Testis (tissue), 5 donors: ENCODE measurements at regions of chr12 and their contacts with region 1.

Region 1: GRCh38 chr12:123141615-123142517 is 9.0 kb downstream of the PITPNM2 start:
- DNase-seq: peak; percentile 83
- H3K4me3 ChIP-seq: no peak overlapping the region
- H3K27ac ChIP-seq: peak overlapping the region in 1 of 2 donors; percentile 74
- H3K4me1 ChIP-seq: peaks cover 41% of the 10 kb centered on the region
- H3K27me3 ChIP-seq: no peaks in the 10 kb centered on the region
- CTCF ChIP-seq: no peak
- POLR2A ChIP-seq: no peak

Region 2: DNA sequence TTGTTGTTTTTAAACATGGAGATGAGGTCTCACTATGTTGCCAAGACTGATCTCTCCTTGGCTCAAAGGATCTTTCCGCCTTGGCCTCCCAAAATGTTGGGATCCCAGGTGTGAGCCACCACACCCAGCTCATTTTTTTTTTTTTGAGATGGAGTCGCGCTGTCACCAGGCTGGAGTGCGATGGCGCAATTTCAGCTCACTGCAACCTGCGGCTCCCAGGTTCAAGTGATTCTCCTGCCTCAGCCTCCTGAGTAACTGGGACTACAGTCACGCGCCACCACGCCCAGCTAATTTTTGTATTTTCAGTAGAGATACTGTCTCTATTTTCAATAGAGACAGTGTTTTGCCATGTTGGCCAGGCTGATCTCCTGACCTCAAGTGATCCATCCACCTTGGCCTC is 714.5 kb before region 1 on chr12:
- intact Hi-C with region 1: no loop called
- DNase-seq: no peak
- H3K4me3 ChIP-seq: no peak overlapping the region
- H3K27ac ChIP-seq: no peak overlapping the region
- H3K4me1 ChIP-seq: peaks cover 12% of the 10 kb centered on the region
- H3K27me3 ChIP-seq: no peaks in the 10 kb centered on the region
- CTCF ChIP-seq: no peak
- POLR2A ChIP-seq: no peak

Region 3: DNA sequence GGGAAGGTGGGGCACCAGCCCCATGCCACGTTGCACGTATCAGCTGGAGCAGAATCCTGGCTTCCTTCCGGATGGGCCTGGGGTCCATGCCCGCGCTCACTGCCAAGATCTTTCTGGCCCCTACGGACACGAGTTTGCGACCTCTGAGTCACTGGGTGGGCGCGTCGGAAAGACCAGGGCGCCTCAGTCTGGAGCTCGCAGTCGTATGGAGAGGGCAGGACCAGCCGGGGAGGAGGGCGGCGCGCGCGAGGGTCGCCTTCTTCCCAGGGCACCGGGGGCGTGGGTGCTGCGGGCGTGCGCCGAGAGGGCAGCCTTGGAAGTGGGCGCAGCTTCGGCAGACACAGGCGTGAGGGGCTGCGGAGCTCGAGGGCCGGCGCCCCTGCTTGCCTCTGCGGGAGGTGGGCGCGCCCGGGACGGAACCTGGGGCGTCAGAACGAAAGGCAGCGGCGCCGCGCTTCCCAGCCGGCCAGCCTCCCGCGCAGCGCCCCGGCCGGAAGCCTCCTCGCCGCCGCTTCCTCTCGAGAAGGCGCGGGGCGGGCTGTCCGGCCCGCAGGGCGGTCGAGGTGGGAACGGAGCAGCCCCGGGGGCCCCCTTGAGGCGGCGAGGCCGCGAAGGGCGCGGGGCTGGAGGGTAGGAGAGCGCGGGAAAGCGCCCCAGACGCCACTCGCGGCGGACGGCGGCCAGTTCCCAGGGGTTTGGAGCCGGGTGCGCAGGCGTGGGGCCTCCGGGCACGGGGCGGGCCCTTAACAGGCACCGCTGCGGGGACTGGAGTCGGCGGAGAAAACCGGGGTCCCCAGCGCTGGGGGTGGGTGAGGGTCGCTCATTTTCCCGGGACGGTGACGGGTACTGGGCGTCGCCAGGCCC is 161.5 kb before region 1 on chr12 and contains the start of gene ARL6IP4:
- intact Hi-C with region 1: loop called (anchors 10 kb)
- DNase-seq: peak; percentile 63
- H3K4me3 ChIP-seq: peak within 1 kb of the TSS; percentile 94 to 97
- H3K27ac ChIP-seq: peak within 1 kb of the TSS; percentile 89 to 92
- H3K4me1 ChIP-seq: peaks cover 62% of the 10 kb centered on the region
- H3K27me3 ChIP-seq: no peaks in the 10 kb centered on the region
- CTCF ChIP-seq: no peak
- POLR2A ChIP-seq: peak; percentile 10
- total RNA-seq, gene ARL6IP4: 169 to 190 TPM

Region 4: GRCh38 chr12:123043536-123044001 is 98.3 kb before region 1 on chr12:
- intact Hi-C with region 1: loop called (anchors 10 kb)
- DNase-seq: peak; percentile 83
- H3K4me3 ChIP-seq: no peak overlapping the region
- H3K27ac ChIP-seq: peak overlapping the region in 1 of 2 donors; percentile 31
- H3K4me1 ChIP-seq: peaks cover 28% of the 10 kb centered on the region
- H3K27me3 ChIP-seq: no peaks in the 10 kb centered on the region
- CTCF ChIP-seq: peak; percentile 43 to 48 (median 47)
- POLR2A ChIP-seq: no peak

Region 5: GRCh38 chr12:123089631-123090353 is 52.1 kb before region 1 on chr12:
- intact Hi-C with region 1: loop called (anchors 10 kb)
- DNase-seq: no peak
- H3K4me3 ChIP-seq: no peak overlapping the region
- H3K27ac ChIP-seq: no peak overlapping the region
- H3K4me1 ChIP-seq: peaks cover 17% of the 10 kb centered on the region
- H3K27me3 ChIP-seq: no peaks in the 10 kb centered on the region
- CTCF ChIP-seq: no peak
- POLR2A ChIP-seq: no peak